ENCODE measurements at regions of chr10 and their contacts with region 1.

Region 1: GRCh38 chr10:57657164-57657765 is 610.4 kb downstream of the IPMK start:
- DNase-seq: peak; percentile 75 to 85
- H3K4me3 ChIP-seq: no peak overlapping the region
- H3K4me3 Mint-ChIP-seq: no peak overlapping the region
- H3K27ac Mint-ChIP-seq: no peak overlapping the region
- H3K4me1 ChIP-seq: no peaks in the 10 kb centered on the region
- H3K4me1 Mint-ChIP-seq: no peaks in the 10 kb centered on the region
- H3K27me3 ChIP-seq: no peaks in the 10 kb centered on the region
- H3K27me3 Mint-ChIP-seq: peaks cover 5% of the 10 kb centered on the region
- CTCF ChIP-seq: peak; percentile 97

Region 2: DNA sequence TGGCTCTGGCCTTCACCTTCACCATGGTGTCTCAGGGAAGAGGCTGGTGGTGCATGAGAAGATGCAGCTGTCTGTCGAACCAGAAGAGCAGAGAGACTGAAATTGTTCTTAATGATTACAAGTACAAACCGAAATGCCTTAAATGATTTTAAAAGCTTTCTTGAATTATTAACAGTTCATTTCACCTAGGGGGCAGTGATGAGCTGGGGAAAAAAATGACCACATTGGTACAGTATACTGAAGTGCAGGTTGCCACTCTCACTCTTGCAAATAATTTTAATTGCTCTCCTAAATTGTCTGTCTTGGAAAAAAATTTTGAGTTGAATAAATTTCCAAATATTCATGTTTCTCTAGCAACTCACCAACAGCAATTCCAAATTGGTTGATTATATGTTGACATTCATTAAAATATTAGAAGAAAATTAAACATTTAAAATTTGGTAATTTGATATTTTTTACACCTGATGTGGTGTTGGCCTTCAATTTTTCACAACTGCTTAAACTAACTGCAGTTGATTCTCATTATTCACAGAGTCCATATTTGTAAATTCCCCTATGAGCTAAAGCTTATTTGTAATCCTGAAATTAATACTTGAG is 1988.8 kb before region 1 on chr10:
- CTCF ChIA-PET with region 1: no interaction called
- POLR2A ChIA-PET with region 1: no interaction called
- intact Hi-C with region 1: loop called (anchors 5 kb)
- DNase-seq: peak in 1 of 2 experiments; percentile 64
- H3K4me3 ChIP-seq: no peak overlapping the region
- H3K4me3 Mint-ChIP-seq: no peak overlapping the region
- H3K27ac Mint-ChIP-seq: no peak overlapping the region
- H3K4me1 ChIP-seq: no peaks in the 10 kb centered on the region
- H3K4me1 Mint-ChIP-seq: no peaks in the 10 kb centered on the region
- H3K27me3 ChIP-seq: no peaks in the 10 kb centered on the region
- H3K27me3 Mint-ChIP-seq: no peaks in the 10 kb centered on the region
- CTCF ChIP-seq: peak; percentile 57 to 70

Region 3: DNA sequence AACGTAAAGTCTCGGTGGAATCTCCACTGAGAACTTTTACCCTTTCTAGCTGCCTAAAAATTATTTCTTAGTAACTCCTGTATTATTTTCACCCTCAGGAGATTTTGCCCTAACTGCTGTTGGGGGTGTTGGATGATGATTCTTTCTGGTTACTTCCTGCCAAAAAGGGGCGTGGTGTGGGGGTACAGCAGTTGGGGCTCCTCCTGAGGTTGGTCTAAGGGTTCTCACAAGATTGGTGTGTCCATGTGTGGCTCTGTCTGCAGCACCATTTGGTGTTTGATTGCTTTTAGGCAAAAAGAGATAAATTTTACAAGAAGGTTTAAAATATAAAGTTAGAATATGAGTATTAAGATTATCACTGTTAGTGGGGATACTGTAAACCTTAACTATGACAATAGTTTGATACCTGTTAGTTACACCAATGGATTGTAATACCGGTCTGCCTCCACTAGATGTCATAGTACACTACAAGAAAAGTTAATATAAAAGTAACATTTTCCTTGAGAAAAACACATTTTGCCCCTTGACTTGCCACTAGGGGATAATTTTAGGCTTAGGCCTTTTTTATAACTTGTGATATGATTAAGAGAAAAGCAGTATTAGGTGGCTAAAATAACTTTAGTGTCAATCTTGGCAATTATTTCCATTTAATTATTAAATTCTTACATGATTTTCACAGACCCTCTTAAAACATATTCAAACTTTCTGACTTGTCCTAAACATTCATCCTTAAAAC is 318.3 kb before region 1 on chr10:
- CTCF ChIA-PET with region 1: interaction called, 5 read pairs
- POLR2A ChIA-PET with region 1: no interaction called
- intact Hi-C with region 1: loop called (anchors 1 kb)
- DNase-seq: peak in 1 of 2 experiments; percentile 64
- H3K4me3 ChIP-seq: no peak overlapping the region
- H3K4me3 Mint-ChIP-seq: no peak overlapping the region
- H3K27ac Mint-ChIP-seq: no peak overlapping the region
- H3K4me1 ChIP-seq: no peaks in the 10 kb centered on the region
- H3K4me1 Mint-ChIP-seq: no peaks in the 10 kb centered on the region
- H3K27me3 ChIP-seq: no peaks in the 10 kb centered on the region
- H3K27me3 Mint-ChIP-seq: no peaks in the 10 kb centered on the region
- CTCF ChIP-seq: peak; percentile 83 to 95

Region 4: GRCh38 chr10:57506414-57507094 is 150.7 kb before region 1 on chr10:
- CTCF ChIA-PET with region 1: no interaction called
- POLR2A ChIA-PET with region 1: no interaction called
- intact Hi-C with region 1: loop called (anchors 5 kb)
- DNase-seq: no peak
- H3K4me3 ChIP-seq: no peak overlapping the region
- H3K4me3 Mint-ChIP-seq: no peak overlapping the region
- H3K27ac Mint-ChIP-seq: no peak overlapping the region
- H3K4me1 ChIP-seq: no peaks in the 10 kb centered on the region
- H3K4me1 Mint-ChIP-seq: no peaks in the 10 kb centered on the region
- H3K27me3 ChIP-seq: no peaks in the 10 kb centered on the region
- H3K27me3 Mint-ChIP-seq: no peaks in the 10 kb centered on the region
- CTCF ChIP-seq: no peak

Region 5: GRCh38 chr10:57579926-57580325 is 77.3 kb before region 1 on chr10:
- CTCF ChIA-PET with region 1: interaction called, 18 read pairs
- POLR2A ChIA-PET with region 1: no interaction called
- intact Hi-C with region 1: loop called (anchors 1 kb)
- DNase-seq: peak in 1 of 2 experiments; percentile 65
- H3K4me3 ChIP-seq: no peak overlapping the region
- H3K4me3 Mint-ChIP-seq: no peak overlapping the region
- H3K27ac Mint-ChIP-seq: no peak overlapping the region
- H3K4me1 ChIP-seq: no peaks in the 10 kb centered on the region
- H3K4me1 Mint-ChIP-seq: no peaks in the 10 kb centered on the region
- H3K27me3 ChIP-seq: no peaks in the 10 kb centered on the region
- H3K27me3 Mint-ChIP-seq: no peaks in the 10 kb centered on the region
- CTCF ChIP-seq: peak; percentile 48 to 61

Region 6: GRCh38 chr10:57849691-57850357 is 192.6 kb after region 1 on chr10:
- CTCF ChIA-PET with region 1: interaction called, 6 read pairs
- POLR2A ChIA-PET with region 1: no interaction called
- intact Hi-C with region 1: loop called (anchors 1 kb)
- DNase-seq: no peak
- H3K4me3 ChIP-seq: no peak overlapping the region
- H3K4me3 Mint-ChIP-seq: no peak overlapping the region
- H3K27ac Mint-ChIP-seq: no peak overlapping the region
- H3K4me1 ChIP-seq: no peaks in the 10 kb centered on the region
- H3K4me1 Mint-ChIP-seq: no peaks in the 10 kb centered on the region
- H3K27me3 ChIP-seq: no peaks in the 10 kb centered on the region
- H3K27me3 Mint-ChIP-seq: no peaks in the 10 kb centered on the region
- CTCF ChIP-seq: peak; percentile 54 to 62

Region 7: GRCh38 chr10:57880441-57881301 is 223.4 kb after region 1 on chr10:
- CTCF ChIA-PET with region 1: no interaction called
- POLR2A ChIA-PET with region 1: no interaction called
- intact Hi-C with region 1: no loop called
- DNase-seq: no peak
- H3K4me3 ChIP-seq: no peak overlapping the region
- H3K4me3 Mint-ChIP-seq: no peak overlapping the region
- H3K27ac Mint-ChIP-seq: no peak overlapping the region
- H3K4me1 ChIP-seq: 0 out of 2 replicates have a peak, but pooled peaks cover 4% of the 10 kb centered on the region
- H3K4me1 Mint-ChIP-seq: no peaks in the 10 kb centered on the region
- H3K27me3 ChIP-seq: no peaks in the 10 kb centered on the region
- H3K27me3 Mint-ChIP-seq: no peaks in the 10 kb centered on the region
- CTCF ChIP-seq: no peak

Region 8: GRCh38 chr10:57891201-57892006 is 234.1 kb after region 1 on chr10:
- CTCF ChIA-PET with region 1: no interaction called
- POLR2A ChIA-PET with region 1: no interaction called
- intact Hi-C with region 1: no loop called
- DNase-seq: no peak
- H3K4me3 ChIP-seq: no peak overlapping the region
- H3K4me3 Mint-ChIP-seq: no peak overlapping the region
- H3K27ac Mint-ChIP-seq: no peak overlapping the region
- H3K4me1 ChIP-seq: peaks cover 4% of the 10 kb centered on the region; the same call in 1 of the 2 replicates
- H3K4me1 Mint-ChIP-seq: peaks cover 8% of the 10 kb centered on the region
- H3K27me3 ChIP-seq: no peaks in the 10 kb centered on the region
- H3K27me3 Mint-ChIP-seq: no peaks in the 10 kb centered on the region
- CTCF ChIP-seq: no peak

Region 9: GRCh38 chr10:58254644-58255043 is 597.4 kb after region 1 on chr10:
- CTCF ChIA-PET with region 1: no interaction called
- POLR2A ChIA-PET with region 1: no interaction called
- intact Hi-C with region 1: no loop called
- DNase-seq: no peak
- H3K4me3 ChIP-seq: no peak overlapping the region
- H3K4me3 Mint-ChIP-seq: no peak overlapping the region
- H3K27ac Mint-ChIP-seq: peak overlapping the region; percentile 20
- H3K4me1 ChIP-seq: peaks cover 18% of the 10 kb centered on the region
- H3K4me1 Mint-ChIP-seq: peaks cover 19% of the 10 kb centered on the region
- H3K27me3 ChIP-seq: no peaks in the 10 kb centered on the region
- H3K27me3 Mint-ChIP-seq: no peaks in the 10 kb centered on the region
- CTCF ChIP-seq: no peak

Measured in Caco-2 (cell line).